ENCODE measurements at regions of chr5 and their contacts with region 1.

Region 1: DNA sequence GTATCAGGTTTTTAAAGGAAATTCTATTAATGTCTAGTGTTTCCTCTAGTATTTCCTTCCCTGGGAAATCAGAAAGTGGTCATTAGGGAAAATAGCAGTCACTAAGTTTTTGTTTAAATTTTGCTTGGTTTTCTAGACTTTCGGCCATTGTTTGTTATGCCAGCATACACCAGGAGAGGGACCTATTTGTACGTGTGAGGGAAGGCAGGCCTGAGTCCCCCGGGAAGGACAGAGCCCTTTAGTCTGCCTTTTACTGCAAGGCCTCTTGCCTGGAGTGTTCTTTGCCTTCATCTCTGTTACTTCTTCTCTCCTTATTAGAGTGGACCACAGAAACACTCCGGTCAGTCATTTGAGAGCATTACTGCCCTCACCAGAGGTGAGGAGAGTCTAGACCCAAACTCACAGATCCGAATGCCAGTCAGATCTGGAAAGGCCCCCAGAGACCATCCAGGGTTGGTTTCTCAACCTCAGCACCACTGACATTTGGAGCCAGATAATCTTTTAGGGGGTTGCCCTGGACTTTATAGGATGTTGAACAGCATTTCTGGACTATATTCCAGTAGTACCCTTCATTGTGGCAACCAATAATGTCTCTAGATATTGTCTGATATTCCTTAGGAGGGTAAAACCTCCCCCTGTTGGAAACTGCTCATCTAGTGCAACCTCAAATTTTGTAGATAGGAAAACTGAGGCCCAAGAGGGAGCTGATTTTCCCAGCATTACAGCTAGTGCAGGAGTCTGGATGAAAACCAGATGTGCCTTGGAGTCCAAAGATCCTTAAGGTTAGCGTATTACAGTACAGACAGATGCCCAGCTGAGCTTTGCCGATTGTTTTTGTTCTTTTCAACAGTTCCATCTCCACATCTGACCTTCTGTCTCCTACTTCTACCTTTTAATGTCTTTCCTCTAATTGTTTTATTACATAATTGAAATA is 93.0 kb upstream of the NIPAL4 start:
- DNase-seq: no peak
- H3K4me3 ChIP-seq: no peak overlapping the region
- H3K27ac ChIP-seq: no peak overlapping the region
- H3K4me1 ChIP-seq: no peaks in the 10 kb centered on the region
- H3K27me3 ChIP-seq: no peaks in the 10 kb centered on the region
- CTCF ChIP-seq: peak in 1 of 3 experiments; percentile 25
- POLR2A ChIP-seq: no peak

Region 2: GRCh38 chr5:157384971-157385709 is 18.1 kb after region 1 on chr5:
- intact Hi-C with region 1: loop called (anchors 1 kb)
- DNase-seq: no peak
- H3K4me3 ChIP-seq: no peak overlapping the region
- H3K27ac ChIP-seq: peak overlapping the region; percentile 68
- H3K4me1 ChIP-seq: peaks cover 18% of the 10 kb centered on the region
- H3K27me3 ChIP-seq: no peaks in the 10 kb centered on the region
- CTCF ChIP-seq: no peak
- POLR2A ChIP-seq: no peak

Region 3: GRCh38 chr5:157464519-157465171 is 97.6 kb after region 1 on chr5:
- intact Hi-C with region 1: loop called (anchors 10 kb)
- DNase-seq: no peak
- H3K4me3 ChIP-seq: no peak overlapping the region
- H3K27ac ChIP-seq: peak overlapping the region; percentile 67
- H3K4me1 ChIP-seq: peaks cover 48% of the 10 kb centered on the region
- H3K27me3 ChIP-seq: no peaks in the 10 kb centered on the region
- CTCF ChIP-seq: no peak
- POLR2A ChIP-seq: no peak

Region 4: GRCh38 chr5:157540707-157541446 is 173.9 kb after region 1 on chr5:
- intact Hi-C with region 1: no loop called
- DNase-seq: no peak
- H3K4me3 ChIP-seq: peak overlapping the region in 1 of 2 donors; percentile 13
- H3K27ac ChIP-seq: peak overlapping the region; percentile 63
- H3K4me1 ChIP-seq: peaks cover 57% of the 10 kb centered on the region
- H3K27me3 ChIP-seq: no peaks in the 10 kb centered on the region
- CTCF ChIP-seq: no peak
- POLR2A ChIP-seq: no peak